Activated T-helper 1 cell treated with anti-CD3 and anti-CD28 coated beads, Interleukin-12 subunit alpha, Interleukin-12 subunit beta, Interleukin-2, Interleukin-4 antibody, amounts not matched to agents 30 ng/mL and 10 ng/mL and 1 ng/mL, durations not matched to agents 14 hours and 24 hours and 36 hours (primary cell): ENCODE measurements at regions of chr2 and their contacts with region 1.

Region 1: DNA sequence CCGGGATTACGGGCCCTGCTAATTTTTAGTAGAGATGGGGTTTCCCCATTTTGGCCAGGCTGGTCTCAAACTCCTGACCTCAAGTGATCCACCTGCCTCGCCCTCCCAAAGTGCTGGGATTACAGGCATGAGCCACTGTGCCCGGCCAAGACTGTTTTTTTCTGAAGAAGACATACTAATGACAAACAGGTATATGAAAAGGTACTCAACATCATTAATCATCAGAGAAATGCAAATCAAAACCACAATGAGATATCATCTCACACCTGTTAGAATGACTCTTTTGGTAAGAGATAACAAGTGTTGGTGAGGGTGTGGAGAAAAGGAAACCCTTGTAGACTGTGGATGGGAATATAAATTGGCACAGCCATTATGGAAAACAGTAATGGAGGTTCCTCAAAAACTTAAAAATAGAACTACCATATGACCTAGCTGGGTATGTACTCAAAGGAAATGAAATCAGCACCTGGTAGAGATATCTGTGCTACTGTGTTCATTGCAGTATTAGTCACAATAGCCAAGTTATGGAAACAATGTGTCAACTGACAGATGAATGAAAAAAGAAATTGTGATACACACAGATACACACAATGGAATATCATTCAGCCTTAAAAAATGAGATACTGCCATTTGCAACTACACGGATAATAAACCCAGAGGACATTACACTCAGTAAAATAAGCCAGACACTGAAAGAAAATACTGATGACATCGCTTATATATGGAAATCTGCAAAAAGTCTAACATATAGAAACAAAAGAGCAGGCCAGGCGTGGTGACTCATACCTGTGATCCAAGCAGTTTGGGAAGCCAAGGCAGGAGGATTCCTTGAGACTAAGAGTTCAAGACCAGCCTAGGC is 20.8 kb downstream of the SOS1 start:
- DNase-seq: no peak
- H3K4me3 Mint-ChIP-seq: peak overlapping the region; percentile 53
- H3K27ac Mint-ChIP-seq: peak overlapping the region; percentile 89
- H3K4me1 Mint-ChIP-seq: peaks cover 70% of the 10 kb centered on the region
- H3K27me3 Mint-ChIP-seq: no peaks in the 10 kb centered on the region

Region 2: DNA sequence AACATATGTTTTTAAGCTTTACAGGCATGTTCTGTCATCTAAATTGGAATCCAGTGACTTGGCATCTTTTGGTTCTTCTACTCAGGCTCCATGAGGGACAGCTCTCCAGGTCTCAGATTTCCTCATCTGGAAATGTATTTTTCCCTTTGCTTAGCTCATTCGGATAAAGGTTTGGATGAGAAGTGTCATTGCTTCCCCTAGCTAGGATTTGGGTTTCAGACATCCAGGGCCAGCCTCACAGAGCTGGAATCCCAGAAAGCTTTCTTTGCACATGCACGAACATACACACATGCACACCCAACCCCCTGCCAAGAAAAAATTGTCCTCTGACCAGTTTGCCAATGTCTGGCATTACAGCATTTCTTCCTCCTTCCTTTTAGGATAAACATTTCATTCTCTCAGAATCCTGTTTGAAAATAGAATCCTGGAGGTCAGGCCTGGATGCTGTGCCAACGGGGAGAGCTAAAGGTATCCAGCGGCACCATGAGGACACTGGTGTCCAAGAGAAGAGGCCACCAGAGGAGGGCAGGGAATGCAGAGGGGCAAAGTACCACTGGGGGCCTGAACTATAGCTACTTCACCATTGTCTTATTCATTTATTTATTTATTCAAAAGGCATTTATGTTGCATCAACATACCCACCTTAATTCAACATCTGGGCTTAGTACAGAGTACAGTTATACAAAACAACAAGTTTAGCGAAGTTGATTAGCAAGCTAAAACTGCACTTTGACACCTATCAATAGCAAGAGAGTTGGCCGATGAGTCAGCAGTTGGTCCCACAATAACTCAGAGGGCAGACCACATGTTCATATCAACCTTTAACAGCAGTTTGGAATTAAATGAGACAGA is 625.2 kb before region 1 on chr2:
- intact Hi-C with region 1: loop called (anchors 10 kb)
- DNase-seq: no peak
- H3K4me3 Mint-ChIP-seq: no peak overlapping the region
- H3K27ac Mint-ChIP-seq: peak overlapping the region; percentile 42
- H3K4me1 Mint-ChIP-seq: peaks cover 32% of the 10 kb centered on the region
- H3K27me3 Mint-ChIP-seq: peaks cover 9% of the 10 kb centered on the region

Region 3: DNA sequence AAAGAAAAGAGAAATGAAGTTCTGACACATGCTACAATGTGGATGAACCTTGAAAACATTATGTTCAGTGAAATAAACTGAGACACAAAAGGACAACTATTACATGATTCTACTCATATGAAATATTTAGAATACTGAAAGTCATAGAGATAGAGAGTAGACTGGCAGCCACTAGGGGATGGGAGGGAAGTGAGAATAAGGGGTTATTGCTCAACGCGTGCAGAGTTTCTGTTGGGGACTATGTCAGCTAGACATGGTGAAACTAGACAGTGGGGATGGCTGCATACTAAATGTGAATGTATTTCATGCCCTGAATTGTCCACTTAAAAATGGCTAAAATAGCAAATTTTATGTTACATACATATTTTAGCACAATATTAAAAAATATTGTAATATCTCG is 614.4 kb before region 1 on chr2:
- intact Hi-C with region 1: no loop called
- DNase-seq: no peak
- H3K4me3 Mint-ChIP-seq: no peak overlapping the region
- H3K27ac Mint-ChIP-seq: no peak overlapping the region
- H3K4me1 Mint-ChIP-seq: no peaks in the 10 kb centered on the region
- H3K27me3 Mint-ChIP-seq: peaks cover 4% of the 10 kb centered on the region

Region 4: GRCh38 chr2:39059366-39059952 is 40.6 kb before region 1 on chr2:
- intact Hi-C with region 1: loop called (anchors 5 kb)
- DNase-seq: no peak
- H3K4me3 Mint-ChIP-seq: no peak overlapping the region
- H3K27ac Mint-ChIP-seq: no peak overlapping the region
- H3K4me1 Mint-ChIP-seq: peaks cover 24% of the 10 kb centered on the region
- H3K27me3 Mint-ChIP-seq: no peaks in the 10 kb centered on the region

Region 5: GRCh38 chr2:39069136-39069515 is 31.0 kb before region 1 on chr2:
- intact Hi-C with region 1: loop called (anchors 2 kb)
- DNase-seq: no peak
- H3K4me3 Mint-ChIP-seq: no peak overlapping the region
- H3K27ac Mint-ChIP-seq: peak overlapping the region; percentile 44
- H3K4me1 Mint-ChIP-seq: peaks cover 44% of the 10 kb centered on the region
- H3K27me3 Mint-ChIP-seq: no peaks in the 10 kb centered on the region